CD4-positive, alpha-beta memory T cell (primary cell): ENCODE measurements at regions of chr16 and their contacts with region 1.

Region 1: GRCh38 chr16:88785106-88785924 is at the start of gene PIEZO1:
- DNase-seq: peak; percentile 79 to 88 (median 85)
- H3K4me3 ChIP-seq: peak within 1 kb of the TSS; percentile 26 to 70
- H3K4me3 Mint-ChIP-seq: peak within 1 kb of the TSS; percentile 79 to 94 (median 85)
- H3K27ac ChIP-seq: peak within 1 kb of the TSS; percentile 74
- H3K27ac Mint-ChIP-seq: peak within 1 kb of the TSS; percentile 17 to 95 (median 72)
- H3K4me1 ChIP-seq: peaks cover 52% of the 10 kb centered on the region
- H3K4me1 Mint-ChIP-seq: peaks cover 32 to 46% (median 41%) of the 10 kb centered on the region in 4 donors
- H3K27me3 ChIP-seq: no peaks in the 10 kb centered on the region
- H3K27me3 Mint-ChIP-seq: no peaks in the 10 kb centered on the region
- total RNA-seq, gene PIEZO1: 274 to 302 TPM

Region 2: GRCh38 chr16:88383401-88384221 is 401.7 kb before region 1 on chr16:
- CTCF ChIA-PET with region 1: no interaction called
- POLR2A ChIA-PET with region 1: no interaction called
- intact Hi-C with region 1: no loop called
- DNase-seq: no peak
- H3K4me3 ChIP-seq: no peak overlapping the region
- H3K4me3 Mint-ChIP-seq: peak overlapping the region in 1 of 8 donors; percentile 43
- H3K27ac ChIP-seq: no peak overlapping the region
- H3K27ac Mint-ChIP-seq: no peak overlapping the region
- H3K4me1 ChIP-seq: peaks cover 6% of the 10 kb centered on the region
- H3K4me1 Mint-ChIP-seq: peaks cover 0 to 8% (median 4%) of the 10 kb centered on the region in 4 donors
- H3K27me3 ChIP-seq: peaks cover 11% of the 10 kb centered on the region
- H3K27me3 Mint-ChIP-seq: peaks cover 24% of the 10 kb centered on the region in 2 donors

Region 3: GRCh38 chr16:88619859-88620815 is 165.2 kb before region 1 on chr16:
- CTCF ChIA-PET with region 1: interaction called, 3 read pairs
- POLR2A ChIA-PET with region 1: interaction called, 13 read pairs
- intact Hi-C with region 1: no loop called
- DNase-seq: peak; percentile 90 to 95 (median 92)
- H3K4me3 ChIP-seq: no peak overlapping the region
- H3K4me3 Mint-ChIP-seq: peak overlapping the region; percentile 46 to 85 (median 68)
- H3K27ac ChIP-seq: peak overlapping the region; percentile 65
- H3K27ac Mint-ChIP-seq: peak overlapping the region; percentile 98 to 100 (median 99)
- H3K4me1 ChIP-seq: peaks cover 45% of the 10 kb centered on the region
- H3K4me1 Mint-ChIP-seq: peaks cover 16 to 54% (median 31%) of the 10 kb centered on the region in 4 donors
- H3K27me3 ChIP-seq: no peaks in the 10 kb centered on the region
- H3K27me3 Mint-ChIP-seq: peaks cover 0 to 1% of the 10 kb centered on the region in 2 donors

Region 4: GRCh38 chr16:88706288-88706964 is 78.9 kb before region 1 on chr16 and contains the starts of genes CTU2 and RNF166:
- CTCF ChIA-PET with region 1: interaction called, 3 read pairs
- POLR2A ChIA-PET with region 1: interaction called, 104 read pairs
- intact Hi-C with region 1: no loop called
- DNase-seq: peak; percentile 90 to 94 (median 91)
- H3K4me3 ChIP-seq: peak within 1 kb of the TSS; percentile 95 to 98
- H3K4me3 Mint-ChIP-seq: peak within 1 kb of the TSS; percentile 93 to 96 (median 96)
- H3K27ac ChIP-seq: peak within 1 kb of the TSS; percentile 85
- H3K27ac Mint-ChIP-seq: peak within 1 kb of the TSS; percentile 97 to 99 (median 98)
- H3K4me1 ChIP-seq: peaks cover 50% of the 10 kb centered on the region
- H3K4me1 Mint-ChIP-seq: peaks cover 20 to 62% (median 39%) of the 10 kb centered on the region in 4 donors
- H3K27me3 ChIP-seq: no peaks in the 10 kb centered on the region
- H3K27me3 Mint-ChIP-seq: no peaks in the 10 kb centered on the region
- total RNA-seq, gene CTU2: 20.4 to 21.1 TPM
- total RNA-seq, gene RNF166: 129 to 137 TPM

Region 5: DNA sequence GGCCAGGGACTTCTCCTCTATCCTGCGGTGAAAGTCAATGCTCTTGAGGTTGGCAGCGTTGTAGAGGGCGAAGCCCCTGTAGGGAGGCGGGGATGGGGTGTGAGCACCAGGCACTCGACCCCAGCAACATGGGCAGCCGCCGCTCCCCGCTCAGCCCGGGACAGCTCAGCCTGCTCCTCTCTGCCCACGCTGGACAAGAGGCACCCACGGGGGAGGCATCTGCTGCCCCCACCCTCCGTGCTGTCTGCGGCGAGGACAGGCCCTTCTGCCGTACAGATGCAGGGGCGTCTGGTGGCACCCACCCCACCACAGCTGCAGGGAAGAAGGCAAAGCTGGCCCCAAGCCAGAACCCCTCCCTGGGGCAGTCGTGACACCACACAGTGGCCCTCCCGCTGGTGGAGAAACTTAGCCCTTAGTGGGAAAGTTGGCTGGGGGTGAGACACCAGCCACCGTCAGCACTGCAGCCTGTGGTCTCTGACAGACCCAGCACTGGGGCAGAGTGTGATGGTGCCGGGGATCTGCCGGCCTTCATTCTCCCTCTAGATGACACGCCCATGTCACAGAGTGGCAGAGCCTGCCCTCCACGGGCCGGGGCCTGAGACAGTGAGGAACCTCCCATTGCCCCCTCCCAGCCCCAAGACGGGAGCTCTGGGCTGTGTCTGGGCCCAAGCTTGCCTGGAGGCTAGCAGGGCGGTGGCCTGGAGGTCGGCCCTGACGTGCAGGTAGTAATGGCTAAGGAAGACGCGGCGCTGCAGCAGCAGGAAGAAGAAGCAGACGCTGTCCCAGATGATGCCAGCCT is 59.5 kb before region 1 on chr16:
- CTCF ChIA-PET with region 1: no interaction called
- POLR2A ChIA-PET with region 1: no interaction called
- intact Hi-C with region 1: no loop called
- DNase-seq: no peak
- H3K4me3 ChIP-seq: no peak overlapping the region
- H3K4me3 Mint-ChIP-seq: no peak overlapping the region
- H3K27ac ChIP-seq: no peak overlapping the region
- H3K27ac Mint-ChIP-seq: no peak overlapping the region
- H3K4me1 ChIP-seq: no peaks in the 10 kb centered on the region
- H3K4me1 Mint-ChIP-seq: peaks cover 0 to 1% (median 0%) of the 10 kb centered on the region in 4 donors
- H3K27me3 ChIP-seq: no peaks in the 10 kb centered on the region
- H3K27me3 Mint-ChIP-seq: no peaks in the 10 kb centered on the region

Region 6: GRCh38 chr16:88743693-88744576 is 41.4 kb before region 1 on chr16:
- CTCF ChIA-PET with region 1: interaction called, 137 read pairs
- POLR2A ChIA-PET with region 1: interaction called, 138 read pairs
- intact Hi-C with region 1: loop called (anchors 1 kb)
- DNase-seq: peak; percentile 65 to 76 (median 69)
- H3K4me3 ChIP-seq: no peak overlapping the region
- H3K4me3 Mint-ChIP-seq: peak overlapping the region in 4 of 8 donors; percentile 16 to 49 (median 30)
- H3K27ac ChIP-seq: no peak overlapping the region
- H3K27ac Mint-ChIP-seq: peak overlapping the region in 4 of 7 donors; percentile 7 to 52 (median 36)
- H3K4me1 ChIP-seq: peaks cover 41% of the 10 kb centered on the region
- H3K4me1 Mint-ChIP-seq: peaks cover 9 to 41% (median 22%) of the 10 kb centered on the region in 4 donors
- H3K27me3 ChIP-seq: no peaks in the 10 kb centered on the region
- H3K27me3 Mint-ChIP-seq: no peaks in the 10 kb centered on the region

Region 7: GRCh38 chr16:88763502-88764053 is 21.7 kb before region 1 on chr16:
- CTCF ChIA-PET with region 1: interaction called, 13 read pairs
- POLR2A ChIA-PET with region 1: interaction called, 62 read pairs
- intact Hi-C with region 1: loop called (anchors 2 kb)
- DNase-seq: peak in 1 of 5 donors; percentile 26
- H3K4me3 ChIP-seq: no peak overlapping the region
- H3K4me3 Mint-ChIP-seq: peak overlapping the region in 1 of 8 donors; percentile 14
- H3K27ac ChIP-seq: no peak overlapping the region
- H3K27ac Mint-ChIP-seq: peak overlapping the region in 6 of 7 donors; percentile 13 to 66 (median 52)
- H3K4me1 ChIP-seq: peaks cover 83% of the 10 kb centered on the region
- H3K4me1 Mint-ChIP-seq: peaks cover 22 to 63% (median 36%) of the 10 kb centered on the region in 4 donors
- H3K27me3 ChIP-seq: no peaks in the 10 kb centered on the region
- H3K27me3 Mint-ChIP-seq: no peaks in the 10 kb centered on the region

Region 8: DNA sequence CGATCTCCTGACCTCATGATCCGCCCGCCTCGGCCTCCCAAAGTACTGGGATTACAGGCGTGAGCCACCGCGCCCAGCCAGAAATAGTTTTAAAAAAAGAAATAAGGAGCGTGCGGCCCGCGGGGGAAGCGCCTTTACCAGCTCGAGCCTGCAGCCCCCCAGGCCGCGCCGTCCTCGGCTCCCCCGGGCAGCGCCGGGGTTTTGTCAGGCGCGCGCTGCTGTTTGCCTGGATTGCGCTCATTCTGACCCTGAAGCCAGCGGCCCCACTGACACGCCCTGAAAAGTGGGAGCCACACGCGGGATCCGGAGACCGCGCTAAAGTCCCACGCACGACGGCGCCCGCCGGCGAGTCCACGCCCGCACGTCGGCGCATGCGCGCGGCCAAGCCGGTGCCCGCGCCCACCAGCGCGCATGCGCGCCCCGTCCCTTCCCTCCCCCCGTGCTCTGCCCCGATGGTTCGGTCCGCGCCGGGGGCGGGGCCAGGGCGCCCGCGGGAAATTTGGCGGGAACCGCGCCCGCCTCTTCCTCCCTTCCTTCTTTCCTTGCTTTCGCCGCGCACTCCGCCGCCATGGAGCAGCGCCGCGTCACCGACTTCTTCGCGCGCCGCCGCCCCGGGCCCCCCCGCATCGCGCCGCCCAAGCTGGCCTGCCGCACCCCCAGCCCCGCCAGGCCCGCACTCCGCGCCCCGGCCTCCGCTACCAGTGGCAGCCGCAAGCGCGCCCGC is 18.1 kb after region 1 on chr16 and contains the start of gene CDT1:
- CTCF ChIA-PET with region 1: interaction called, 23 read pairs
- POLR2A ChIA-PET with region 1: interaction called, 206 read pairs
- intact Hi-C with region 1: loop called (anchors 1 kb)
- DNase-seq: peak; percentile 74 to 90 (median 84)
- H3K4me3 ChIP-seq: peak within 1 kb of the TSS; percentile 36 to 68
- H3K4me3 Mint-ChIP-seq: peak within 1 kb of the TSS; percentile 83 to 91 (median 88)
- H3K27ac ChIP-seq: peak within 1 kb of the TSS; percentile 55
- H3K27ac Mint-ChIP-seq: peak within 1 kb of the TSS; percentile 73 to 95 (median 89)
- H3K4me1 ChIP-seq: peaks cover 26% of the 10 kb centered on the region
- H3K4me1 Mint-ChIP-seq: peaks cover 6 to 24% (median 16%) of the 10 kb centered on the region in 4 donors
- H3K27me3 ChIP-seq: no peaks in the 10 kb centered on the region
- H3K27me3 Mint-ChIP-seq: no peaks in the 10 kb centered on the region
- total RNA-seq, gene CDT1: 0.17 TPM

Region 9: DNA sequence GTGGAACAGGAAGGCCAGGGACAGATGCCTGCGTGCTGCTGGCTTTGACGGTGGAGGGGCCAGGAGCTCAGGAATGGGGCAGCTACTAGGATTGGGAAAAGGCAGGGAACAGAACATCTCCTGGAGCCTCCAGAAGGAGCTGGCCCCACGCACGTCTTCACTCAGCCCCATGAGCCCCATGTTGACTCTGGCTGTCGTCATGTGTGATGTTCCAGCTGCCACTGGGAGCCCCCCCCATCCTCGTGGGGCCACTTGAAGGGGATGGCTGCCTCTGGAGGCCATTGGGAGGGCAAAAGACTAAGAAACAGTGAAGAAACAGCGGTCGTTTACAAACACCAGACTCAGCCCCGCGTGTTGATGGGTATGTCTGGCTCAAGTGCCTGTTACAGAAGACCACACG is 44.9 kb after region 1 on chr16:
- CTCF ChIA-PET with region 1: no interaction called
- POLR2A ChIA-PET with region 1: no interaction called
- intact Hi-C with region 1: no loop called
- DNase-seq: no peak
- H3K4me3 ChIP-seq: no peak overlapping the region
- H3K4me3 Mint-ChIP-seq: no peak overlapping the region
- H3K27ac ChIP-seq: no peak overlapping the region
- H3K27ac Mint-ChIP-seq: no peak overlapping the region
- H3K4me1 ChIP-seq: no peaks in the 10 kb centered on the region
- H3K4me1 Mint-ChIP-seq: no peaks in the 10 kb centered on the region
- H3K27me3 ChIP-seq: no peaks in the 10 kb centered on the region
- H3K27me3 Mint-ChIP-seq: no peaks in the 10 kb centered on the region

Region 10: GRCh38 chr16:88856828-88857733 is 71.8 kb after region 1 on chr16 and contains the starts of genes GALNS and TRAPPC2L:
- CTCF ChIA-PET with region 1: interaction called, 30 read pairs
- POLR2A ChIA-PET with region 1: interaction called, 34 read pairs
- intact Hi-C with region 1: loop called (anchors 1 kb)
- DNase-seq: peak; percentile 96 to 98 (median 97)
- H3K4me3 ChIP-seq: peak within 1 kb of the TSS; percentile 67 to 93
- H3K4me3 Mint-ChIP-seq: peak within 1 kb of the TSS; percentile 94 to 100 (median 97)
- H3K27ac ChIP-seq: peak within 1 kb of the TSS; percentile 76
- H3K27ac Mint-ChIP-seq: peak within 1 kb of the TSS; percentile 95 to 99 (median 97)
- H3K4me1 ChIP-seq: peaks cover 27% of the 10 kb centered on the region
- H3K4me1 Mint-ChIP-seq: peaks cover 18 to 43% (median 28%) of the 10 kb centered on the region in 4 donors
- H3K27me3 ChIP-seq: no peaks in the 10 kb centered on the region
- H3K27me3 Mint-ChIP-seq: peaks cover 0 to 2% of the 10 kb centered on the region in 2 donors
- total RNA-seq, gene GALNS: 58.8 to 65.7 TPM
- total RNA-seq, gene TRAPPC2L: 66.6 to 67.1 TPM

Region 11: GRCh38 chr16:88882358-88883030 is 97.2 kb after region 1 on chr16:
- CTCF ChIA-PET with region 1: no interaction called
- POLR2A ChIA-PET with region 1: no interaction called
- intact Hi-C with region 1: no loop called
- DNase-seq: peak in 1 of 5 donors; percentile 12
- H3K4me3 ChIP-seq: no peak overlapping the region
- H3K4me3 Mint-ChIP-seq: peak overlapping the region in 1 of 8 donors; percentile 61
- H3K27ac ChIP-seq: no peak overlapping the region
- H3K27ac Mint-ChIP-seq: no peak overlapping the region
- H3K4me1 ChIP-seq: no peaks in the 10 kb centered on the region
- H3K4me1 Mint-ChIP-seq: peaks cover 2 to 6% (median 4%) of the 10 kb centered on the region in 4 donors
- H3K27me3 ChIP-seq: no peaks in the 10 kb centered on the region
- H3K27me3 Mint-ChIP-seq: no peaks in the 10 kb centered on the region